ENCODE measurements at regions of chr4 and their contacts with region 1.

Region 1: GRCh38 chr4:137861682-137862081 is 329.4 kb upstream of the PCDH18 start:
- DNase-seq: no peak
- H3K4me3 ChIP-seq: no peak overlapping the region
- H3K27ac ChIP-seq: no peak overlapping the region
- H3K4me1 ChIP-seq: no peaks in the 10 kb centered on the region
- H3K27me3 ChIP-seq: no peaks in the 10 kb centered on the region
- CTCF ChIP-seq: peak; percentile 14 to 47 (median 42)
- EP300 ChIP-seq: no peak
- POLR2A ChIP-seq: no peak

Region 2: DNA sequence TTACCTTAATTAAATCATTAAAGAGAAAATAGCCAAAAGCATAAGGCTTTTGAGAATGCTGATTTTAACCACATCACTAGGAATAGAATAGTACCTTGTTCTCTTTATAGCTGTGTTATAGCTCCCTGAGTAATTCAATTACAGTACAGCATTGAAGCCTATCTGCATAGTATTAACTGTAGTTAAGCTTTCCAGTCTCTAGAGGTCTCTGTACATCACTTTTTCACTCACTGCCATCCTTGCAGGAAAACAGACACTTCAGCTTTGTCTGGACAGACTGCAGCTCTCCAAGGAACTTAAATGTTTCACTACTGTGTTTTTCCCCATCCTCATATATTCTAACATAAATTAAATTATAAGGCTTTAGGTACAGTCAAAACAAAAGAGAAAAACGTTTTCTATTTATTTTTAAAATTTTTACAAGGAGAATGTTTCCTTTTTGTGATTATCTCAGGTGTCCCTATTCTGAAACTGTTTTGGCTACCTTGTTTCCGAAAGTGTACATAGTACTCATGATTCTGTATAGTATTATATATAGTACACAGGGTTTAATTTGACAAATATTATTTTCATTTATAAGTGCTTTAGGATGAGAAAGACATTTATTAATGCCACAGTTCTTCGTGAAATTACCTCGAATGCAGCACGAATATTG is 737.3 kb before region 1 on chr4:
- in situ Hi-C with region 1: loop called in 1 of 4 experiments (anchors 25 kb)
- intact Hi-C with region 1: loop called (anchors 5 kb)
- DNase-seq: no peak
- H3K4me3 ChIP-seq: peak overlapping the region in 3 of 4 donors; percentile 14 to 33 (median 17)
- H3K27ac ChIP-seq: no peak overlapping the region
- H3K4me1 ChIP-seq: no peaks in the 10 kb centered on the region
- H3K27me3 ChIP-seq: no peaks in the 10 kb centered on the region
- CTCF ChIP-seq: peak; percentile 26 to 39 (median 35)
- EP300 ChIP-seq: no peak
- POLR2A ChIP-seq: no peak

Measured in transverse colon (tissue), 4 donors.